AG04450 (cell line): ENCODE measurements at regions of chr1 and their contacts with region 1.

Region 1: DNA sequence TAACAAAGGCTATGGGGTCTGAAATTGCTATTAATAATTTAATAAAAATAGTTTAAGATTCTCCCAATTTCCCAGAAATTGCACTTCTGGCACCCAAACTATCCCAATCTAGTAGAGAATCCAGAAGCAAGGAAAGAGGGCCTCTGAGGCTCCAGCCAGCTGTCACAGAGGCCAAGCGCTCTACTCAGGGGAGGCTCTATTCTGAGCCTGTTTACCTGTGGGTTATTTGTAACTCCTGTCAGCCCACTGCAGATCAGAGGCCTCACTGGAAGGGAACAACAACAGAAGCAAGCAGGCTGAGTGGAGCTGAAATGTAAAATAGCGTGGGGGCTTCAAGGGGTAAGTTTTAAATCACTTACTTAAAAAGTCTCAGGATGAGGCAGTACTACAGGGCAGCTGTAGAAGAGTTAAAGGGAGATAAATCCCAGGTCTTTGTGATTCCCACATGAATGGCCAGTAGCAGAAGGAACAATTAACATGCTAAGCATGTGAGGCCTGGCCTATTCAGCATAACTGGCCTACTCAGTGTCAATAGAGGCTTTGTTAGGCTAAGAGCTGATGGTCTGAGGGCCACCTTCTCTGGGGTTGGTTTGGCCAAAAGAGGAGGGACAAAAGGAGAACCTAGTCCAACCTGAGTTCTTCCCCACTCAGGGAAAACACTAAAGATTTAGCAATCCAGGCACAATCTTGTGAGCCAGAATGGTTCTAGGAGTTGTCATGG is 12.8 kb downstream of the ZNF687 start:
- DNase-seq: no peak
- H3K4me3 ChIP-seq: no peak overlapping the region
- H3K27ac ChIP-seq: no peak overlapping the region
- H3K27me3 ChIP-seq: no peaks in the 10 kb centered on the region
- CTCF ChIP-seq: no peak

Region 2: GRCh38 chr1:151267760-151268159 is 27.1 kb before region 1 on chr1:
- CTCF ChIA-PET with region 1: no interaction called
- POLR2A ChIA-PET with region 1: no interaction called
- DNase-seq: no peak
- H3K4me3 ChIP-seq: no peak overlapping the region
- H3K27ac ChIP-seq: no peak overlapping the region
- H3K27me3 ChIP-seq: no peaks in the 10 kb centered on the region
- CTCF ChIP-seq: no peak

Region 3: GRCh38 chr1:151281969-151282882 is 12.7 kb before region 1 on chr1 and contains the start of gene ZNF687:
- CTCF ChIA-PET with region 1: interaction called, 12 read pairs
- POLR2A ChIA-PET with region 1: interaction called, 7 read pairs
- DNase-seq: peak; percentile 100
- H3K4me3 ChIP-seq: peak within 1 kb of the TSS; percentile 98
- H3K27ac ChIP-seq: peak within 1 kb of the TSS; percentile 100
- H3K27me3 ChIP-seq: peaks cover 3% of the 10 kb centered on the region
- CTCF ChIP-seq: no peak
- polyA plus RNA-seq, gene ZNF687: 10.5 and 12.0 TPM in 2 replicates

Region 4: GRCh38 chr1:151311589-151312331 is 16.9 kb after region 1 on chr1:
- CTCF ChIA-PET with region 1: interaction called, 68 read pairs
- POLR2A ChIA-PET with region 1: interaction called, 3 read pairs
- DNase-seq: peak; percentile 97
- H3K4me3 ChIP-seq: no peak overlapping the region
- H3K27ac ChIP-seq: peak overlapping the region; percentile 99
- H3K27me3 ChIP-seq: no peaks in the 10 kb centered on the region
- CTCF ChIP-seq: no peak

Region 5: DNA sequence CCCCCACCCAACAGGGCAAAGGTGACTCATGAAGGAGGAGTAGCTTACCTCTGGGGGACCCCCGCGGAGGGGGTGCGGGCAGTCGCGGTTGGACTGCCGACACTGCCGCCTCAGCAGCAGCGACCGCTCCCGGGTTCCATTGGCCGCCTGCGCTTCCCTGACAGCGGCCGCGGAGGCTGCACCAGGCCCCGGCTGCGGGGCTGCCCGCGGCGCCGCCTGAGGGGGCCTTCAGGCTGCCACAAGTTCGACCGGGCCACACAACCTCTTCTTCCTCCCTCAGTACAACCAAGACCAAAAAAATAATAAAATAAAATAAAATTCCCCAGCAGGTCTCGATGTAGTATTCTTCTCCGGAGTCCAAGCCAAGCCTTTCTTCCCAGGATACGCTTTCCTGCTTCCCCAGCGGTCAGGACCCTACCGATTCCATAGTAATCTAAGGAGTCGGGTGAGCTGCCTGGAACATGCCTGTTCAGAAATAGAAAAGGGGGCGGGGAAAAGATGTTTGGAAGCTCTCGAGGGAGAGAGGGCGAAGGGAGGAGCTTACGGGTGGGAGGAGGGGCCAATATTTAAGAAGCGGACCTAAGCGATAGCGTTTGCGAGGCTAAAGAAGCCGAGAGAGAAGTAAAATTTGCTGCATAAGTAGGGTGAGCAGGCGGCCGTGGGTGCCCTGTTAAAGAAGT is 32.5 kb after region 1 on chr1 and contains the start of gene PI4KB:
- CTCF ChIA-PET with region 1: interaction called, 18 read pairs
- POLR2A ChIA-PET with region 1: interaction called, 4 read pairs
- DNase-seq: peak; percentile 93
- H3K4me3 ChIP-seq: peak within 1 kb of the TSS; percentile 84
- H3K27ac ChIP-seq: peak within 1 kb of the TSS; percentile 95
- H3K27me3 ChIP-seq: no peaks in the 10 kb centered on the region
- CTCF ChIP-seq: no peak
- polyA plus RNA-seq, gene PI4KB: 75.2 and 83.2 TPM in 2 replicates